CD8-positive, alpha-beta T cell (primary cell): ENCODE measurements at regions of chr15 and their contacts with region 1.

Region 1: GRCh38 chr15:45022871-45023658 is at the start of gene SORD:
- DNase-seq: peak; percentile 75 to 92 (median 90)
- ATAC-seq: peak; percentile 99
- H3K4me3 ChIP-seq: peak within 1 kb of the TSS; percentile 74 to 92
- H3K4me3 Mint-ChIP-seq: peak within 1 kb of the TSS; percentile 88
- H3K27ac ChIP-seq: no peak within 1 kb of the TSS
- H3K27ac Mint-ChIP-seq: peak within 1 kb of the TSS; percentile 69
- H3K4me1 ChIP-seq: peaks cover 12% of the 10 kb centered on the region
- H3K4me1 Mint-ChIP-seq: peaks cover 36% of the 10 kb centered on the region
- H3K27me3 ChIP-seq: no peaks in the 10 kb centered on the region
- H3K27me3 Mint-ChIP-seq: peaks cover 13% of the 10 kb centered on the region
- CTCF ChIP-seq: no peak
- total RNA-seq, gene SORD: 1.2 to 1.4 TPM

Region 2: DNA sequence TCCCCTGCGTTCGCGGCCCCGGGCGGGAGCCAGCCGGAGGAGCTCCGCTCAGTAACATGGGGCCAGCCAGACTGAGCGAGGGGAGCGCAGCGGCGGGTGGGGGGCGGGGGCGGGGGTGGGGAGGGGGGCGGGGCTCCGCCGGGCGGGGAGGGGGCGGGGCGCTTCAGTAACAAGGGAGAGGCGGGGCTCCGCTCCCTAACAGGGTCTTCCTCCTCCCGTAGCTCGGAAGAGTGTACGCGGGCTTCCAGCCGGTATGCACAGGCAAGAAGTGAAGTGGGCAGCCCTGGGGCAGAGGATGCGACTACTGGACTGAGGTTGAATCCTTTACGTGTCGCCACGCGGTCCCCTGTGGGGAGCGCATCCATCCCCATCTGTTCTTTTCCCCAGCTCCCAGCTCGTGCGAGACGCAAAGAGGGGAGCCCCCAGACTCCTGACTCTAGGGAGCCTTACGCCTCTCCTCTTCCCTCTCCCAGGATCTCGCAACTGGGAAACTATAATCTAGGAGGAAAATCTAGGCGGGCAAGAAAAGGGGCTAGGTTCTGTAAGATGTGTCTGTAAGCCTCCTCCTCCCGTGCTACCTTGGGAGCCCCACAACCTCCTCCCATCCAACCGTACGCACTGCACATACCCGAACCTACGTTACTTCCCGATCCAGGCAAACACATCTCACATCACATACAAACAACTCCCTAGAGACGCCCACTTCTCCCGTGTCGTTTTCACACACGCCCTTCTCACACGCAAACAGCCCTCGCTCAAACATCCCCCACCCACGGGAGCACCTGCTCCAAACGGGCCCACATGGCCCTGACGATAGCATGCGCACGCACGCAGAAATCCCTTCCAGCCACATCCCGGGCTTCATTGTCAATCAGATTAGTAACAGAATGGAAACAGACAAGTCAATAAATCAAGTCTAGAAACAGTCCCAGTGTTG is 165.1 kb after region 1 on chr15 and contains the start of gene SHF:
- CTCF ChIA-PET with region 1: no interaction called
- POLR2A ChIA-PET with region 1: no interaction called
- intact Hi-C with region 1: loop called in 1 of 2 experiments (anchors 10 kb)
- DNase-seq: peak; percentile 24 to 87 (median 68)
- ATAC-seq: peak; percentile 79
- H3K4me3 ChIP-seq: peak within 1 kb of the TSS; percentile 84 to 99
- H3K4me3 Mint-ChIP-seq: peak within 1 kb of the TSS; percentile 89
- H3K27ac ChIP-seq: peak within 1 kb of the TSS; percentile 71 to 73
- H3K27ac Mint-ChIP-seq: peak within 1 kb of the TSS; percentile 90
- H3K4me1 ChIP-seq: peaks cover 16% of the 10 kb centered on the region
- H3K4me1 Mint-ChIP-seq: peaks cover 26% of the 10 kb centered on the region
- H3K27me3 ChIP-seq: no peaks in the 10 kb centered on the region
- H3K27me3 Mint-ChIP-seq: no peaks in the 10 kb centered on the region
- CTCF ChIP-seq: no peak
- total RNA-seq, gene SHF: 5.0 to 5.6 TPM